ENCODE measurements at regions of chr4 and their contacts with region 1.

Region 1: DNA sequence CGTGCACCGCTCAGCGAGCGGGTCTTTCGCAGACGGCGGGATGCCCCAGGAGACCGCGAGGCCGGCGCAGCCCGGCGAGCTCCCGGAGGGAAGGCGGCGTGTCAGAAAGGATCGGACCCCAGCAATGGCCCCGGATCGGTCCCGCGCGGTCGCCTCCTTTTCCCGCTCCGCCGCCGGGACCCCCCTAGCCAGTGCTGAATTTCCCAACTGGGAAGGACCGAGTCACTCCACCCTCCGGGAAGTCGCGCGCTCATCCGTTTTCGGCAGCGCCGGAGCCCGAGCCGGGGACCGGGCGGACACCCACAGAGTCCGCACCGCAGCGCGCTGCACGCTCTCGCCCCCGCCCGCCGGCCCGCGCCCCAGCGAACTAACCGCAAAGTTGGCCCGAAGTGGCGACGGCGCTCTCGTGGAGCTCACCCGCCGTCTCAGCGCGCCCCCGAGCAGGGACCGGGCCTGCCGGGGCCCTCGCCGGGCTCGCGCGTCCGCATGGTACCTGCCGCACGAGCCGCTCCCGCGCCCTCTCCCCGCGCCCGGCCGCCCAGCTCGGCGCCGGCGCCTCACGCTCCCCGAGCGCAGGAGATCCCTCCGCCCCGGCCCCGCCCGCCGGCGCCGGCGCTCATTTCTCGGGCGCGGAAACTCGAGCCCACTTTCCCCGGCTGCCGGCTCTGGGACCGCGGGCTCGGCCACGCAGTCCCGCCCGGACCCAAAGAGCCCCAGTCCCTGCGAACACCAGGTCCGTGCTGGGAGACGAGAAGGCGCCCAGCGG is at the start of gene FAT1:
- DNase-seq: peak; percentile 78
- ATAC-seq: peak; percentile 57 to 58
- total RNA-seq, gene FAT1: 66.0 to 67.8 TPM

Region 2: GRCh38 chr4:186669159-186669731 is 54.2 kb before region 1 on chr4:
- intact Hi-C with region 1: loop called in 1 of 2 experiments (anchors 2 kb)
- DNase-seq: no peak
- ATAC-seq: peak; percentile 73 to 80

Region 3: GRCh38 chr4:186676531-186677161 is 46.8 kb before region 1 on chr4:
- intact Hi-C with region 1: loop called in 1 of 2 experiments (anchors 5 kb)
- DNase-seq: no peak
- ATAC-seq: peak; percentile 83 to 96

Measured in left cardiac atrium (tissue), 4 donors.